GM12878 (cell line): ENCODE measurements at regions of chr3 and their contacts with region 1.

Region 1: DNA sequence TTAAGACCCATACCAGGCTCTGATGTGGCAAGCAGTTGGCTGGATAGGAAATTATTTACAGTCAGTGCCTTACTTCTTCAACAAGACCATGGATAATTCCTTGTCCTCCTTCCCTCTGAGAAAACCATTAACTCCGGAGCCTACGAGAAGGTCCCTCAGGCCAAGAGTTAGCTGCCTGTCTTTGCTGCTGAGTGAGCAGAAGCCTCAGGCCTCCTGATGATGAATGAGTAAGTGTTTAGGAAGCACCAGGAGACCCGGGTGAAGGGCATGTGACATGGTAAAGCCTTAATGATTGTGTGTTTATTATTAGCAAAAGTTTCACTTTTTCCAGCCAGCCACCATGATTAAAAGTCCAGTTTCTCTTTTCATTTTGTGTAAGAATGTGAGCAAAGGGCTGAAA is 174.9 kb upstream of the TOPAZ1 start:
- DNase-seq: no peak
- ATAC-seq: peak; percentile 22; the same call in 2 of the 3 replicates
- H3K4me3 ChIP-seq: no peak overlapping the region
- H3K27ac ChIP-seq: no peak overlapping the region
- H3K4me1 ChIP-seq: peaks cover 13% of the 10 kb centered on the region; the same call in 1 of the 2 replicates
- H3K27me3 ChIP-seq: no peaks in the 10 kb centered on the region
- CTCF ChIP-seq: no peak
- EP300 ChIP-seq: no peak
- POLR2A ChIP-seq: no peak
- RAD21 ChIP-seq: no peak

Region 2: GRCh38 chr3:43733459-43734384 is 333.1 kb before region 1 on chr3:
- CTCF ChIA-PET with region 1: no interaction called
- POLR2A ChIA-PET with region 1: no interaction called
- RAD21 ChIA-PET with region 1: no interaction called
- SMC1A ChIA-PET with region 1: no interaction called
- in situ Hi-C with region 1: no loop called
- intact Hi-C with region 1: no loop called
- DNase-seq: no peak
- ATAC-seq: no peak
- H3K4me3 ChIP-seq: no peak overlapping the region
- H3K27ac ChIP-seq: no peak overlapping the region
- H3K4me1 ChIP-seq: no peaks in the 10 kb centered on the region
- H3K27me3 ChIP-seq: no peaks in the 10 kb centered on the region
- CTCF ChIP-seq: no peak
- EP300 ChIP-seq: no peak
- POLR2A ChIP-seq: no peak
- RAD21 ChIP-seq: no peak

Region 3: GRCh38 chr3:44077246-44077645 is 10.4 kb after region 1 on chr3:
- CTCF ChIA-PET with region 1: interaction called, 3 read pairs
- POLR2A ChIA-PET with region 1: no interaction called
- RAD21 ChIA-PET with region 1: no interaction called
- SMC1A ChIA-PET with region 1: interaction called, 11 read pairs
- in situ Hi-C with region 1: no loop called
- intact Hi-C with region 1: no loop called
- DNase-seq: no peak
- ATAC-seq: peak; percentile 50; the same call in 1 of the 3 replicates
- H3K4me3 ChIP-seq: no peak overlapping the region
- H3K27ac ChIP-seq: no peak overlapping the region
- H3K4me1 ChIP-seq: no peaks in the 10 kb centered on the region; the same call in 1 of the 2 replicates
- H3K27me3 ChIP-seq: no peaks in the 10 kb centered on the region
- CTCF ChIP-seq: peak; percentile 13 to 29 (median 16); a peak in 4 of 6 replicates
- EP300 ChIP-seq: no peak
- POLR2A ChIP-seq: no peak
- RAD21 ChIP-seq: peak; percentile 57